AG04450 (cell line): ENCODE measurements at regions of chr15 and their contacts with region 1.

Region 1: GRCh38 chr15:78093242-78094020 is 1.1 kb downstream of the SH2D7 start:
- DNase-seq: peak; percentile 92
- H3K4me3 ChIP-seq: no peak overlapping the region
- H3K27ac ChIP-seq: peak overlapping the region; percentile 40
- H3K27me3 ChIP-seq: peaks cover 12% of the 10 kb centered on the region
- CTCF ChIP-seq: no peak

Region 2: GRCh38 chr15:77966540-77967290 is 126.7 kb before region 1 on chr15:
- CTCF ChIA-PET with region 1: interaction called, 15 read pairs
- POLR2A ChIA-PET with region 1: no interaction called
- DNase-seq: peak; percentile 11
- H3K4me3 ChIP-seq: no peak overlapping the region
- H3K27ac ChIP-seq: no peak overlapping the region
- H3K27me3 ChIP-seq: peaks cover 18% of the 10 kb centered on the region
- CTCF ChIP-seq: peak; percentile 94

Region 3: GRCh38 chr15:78000091-78000926 is 93.1 kb before region 1 on chr15:
- CTCF ChIA-PET with region 1: interaction called, 6 read pairs
- POLR2A ChIA-PET with region 1: interaction called, 10 read pairs
- DNase-seq: no peak
- H3K4me3 ChIP-seq: no peak overlapping the region
- H3K27ac ChIP-seq: no peak overlapping the region
- H3K27me3 ChIP-seq: no peaks in the 10 kb centered on the region
- CTCF ChIP-seq: peak; percentile 30

Region 4: GRCh38 chr15:78049691-78050440 is 43.6 kb before region 1 on chr15:
- CTCF ChIA-PET with region 1: no interaction called
- POLR2A ChIA-PET with region 1: interaction called, 17 read pairs
- DNase-seq: no peak
- H3K4me3 ChIP-seq: no peak overlapping the region
- H3K27ac ChIP-seq: peak overlapping the region; percentile 25
- H3K27me3 ChIP-seq: no peaks in the 10 kb centered on the region
- CTCF ChIP-seq: no peak

Region 5: GRCh38 chr15:78065284-78065872 is 28.1 kb before region 1 on chr15:
- CTCF ChIA-PET with region 1: no interaction called
- POLR2A ChIA-PET with region 1: interaction called, 10 read pairs
- DNase-seq: peak; percentile 94
- H3K4me3 ChIP-seq: peak overlapping the region; percentile 25; the same call in 1 of the 2 replicates
- H3K27ac ChIP-seq: peak overlapping the region; percentile 98
- H3K27me3 ChIP-seq: no peaks in the 10 kb centered on the region
- CTCF ChIP-seq: no peak

Region 6: DNA sequence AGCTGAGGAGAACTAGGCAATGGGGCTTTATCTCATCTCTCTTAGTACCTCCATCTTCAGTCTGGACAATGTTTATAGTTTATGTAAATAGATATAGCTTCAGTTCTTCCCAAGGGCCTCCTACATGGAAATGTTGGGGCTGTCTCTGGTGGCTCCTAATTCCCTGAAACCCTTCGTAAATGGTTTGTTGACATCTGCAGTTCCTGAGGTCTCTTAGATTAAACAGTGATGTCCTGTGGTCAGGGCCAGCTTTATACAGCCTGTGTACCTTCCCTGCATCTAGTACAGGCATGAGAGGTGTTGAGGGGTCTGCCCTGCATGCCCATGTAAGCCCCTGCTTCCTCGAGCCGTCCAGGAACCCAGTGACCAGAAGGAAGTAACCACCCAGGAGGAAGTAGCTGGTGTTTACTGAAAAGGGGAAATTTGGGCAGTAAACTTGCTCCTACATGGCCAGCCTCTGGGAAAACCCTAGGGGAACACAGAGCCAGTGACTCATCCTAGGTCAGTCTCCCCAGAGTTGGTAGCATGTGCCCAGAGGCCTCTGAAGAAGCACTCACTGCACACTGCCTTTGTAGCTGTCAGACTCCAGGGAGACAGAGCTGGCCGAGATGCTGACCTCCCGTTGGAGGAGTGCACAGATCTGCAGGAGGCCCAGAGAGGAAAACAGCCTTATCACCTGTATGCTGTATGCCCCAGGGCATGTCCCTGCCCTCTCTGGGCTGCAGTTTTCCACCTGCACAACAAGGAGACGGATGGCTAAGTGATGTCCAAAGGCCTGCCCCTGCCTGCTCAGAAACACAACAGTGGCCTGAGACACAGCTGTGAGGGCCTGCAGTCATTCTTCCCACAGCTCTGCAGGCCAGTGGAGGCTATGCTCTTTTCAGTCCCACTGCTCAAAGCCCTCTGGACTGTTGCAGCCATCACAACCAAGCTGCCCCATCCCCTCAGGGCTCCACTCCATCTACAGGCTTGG is 11.0 kb before region 1 on chr15:
- CTCF ChIA-PET with region 1: no interaction called
- POLR2A ChIA-PET with region 1: interaction called, 15 read pairs
- DNase-seq: no peak
- H3K4me3 ChIP-seq: no peak overlapping the region
- H3K27ac ChIP-seq: peak overlapping the region; percentile 52
- H3K27me3 ChIP-seq: no peaks in the 10 kb centered on the region
- CTCF ChIP-seq: no peak

Region 7: GRCh38 chr15:78315686-78316282 is 222.4 kb after region 1 on chr15:
- CTCF ChIA-PET with region 1: no interaction called
- POLR2A ChIA-PET with region 1: no interaction called
- DNase-seq: no peak
- H3K4me3 ChIP-seq: no peak overlapping the region
- H3K27ac ChIP-seq: no peak overlapping the region
- H3K27me3 ChIP-seq: peaks cover 18% of the 10 kb centered on the region
- CTCF ChIP-seq: peak; percentile 20; the same call in 1 of the 2 replicates

Region 8: DNA sequence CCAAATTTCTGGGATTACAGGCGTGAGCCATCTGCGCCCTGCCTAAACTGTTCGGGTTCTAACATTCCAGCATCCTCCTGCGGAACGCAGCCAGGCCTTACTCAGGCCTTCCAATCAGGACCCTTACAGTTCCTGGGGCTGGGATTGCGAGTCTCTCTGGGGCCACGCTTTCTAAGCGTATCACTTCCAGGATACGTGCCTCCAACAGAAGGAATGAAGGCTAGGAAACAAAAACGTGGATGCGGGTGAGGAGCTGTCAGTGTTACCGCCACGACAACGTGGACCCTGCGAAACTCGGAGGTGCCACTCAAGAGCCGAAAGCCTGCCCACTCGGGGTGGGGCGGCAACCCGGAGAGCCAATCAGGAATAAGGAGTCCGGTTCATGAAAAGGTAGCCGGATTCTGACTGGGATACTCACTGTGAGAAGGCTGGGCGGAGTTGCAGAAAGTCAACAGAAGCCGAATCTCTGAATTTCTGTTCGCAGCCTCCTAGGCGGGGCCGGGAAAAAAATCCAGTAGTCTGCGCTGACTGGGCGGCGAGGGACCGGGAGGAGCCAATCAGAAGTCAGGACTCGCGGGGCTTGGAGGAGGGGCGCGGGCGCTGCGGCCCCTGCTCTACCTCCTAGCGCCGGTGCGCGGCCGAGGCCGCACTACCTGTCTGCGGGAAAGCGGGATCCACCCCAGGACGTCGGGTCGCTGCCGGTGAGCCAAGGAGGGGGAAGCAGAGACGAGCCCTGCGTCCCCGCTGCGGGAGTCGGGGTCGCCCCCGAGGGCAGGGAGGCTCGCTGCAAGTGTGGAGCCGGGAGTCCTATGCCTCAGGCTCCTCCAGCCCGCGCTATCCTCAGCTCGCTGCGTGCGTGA is 413.8 kb after region 1 on chr15 and contains the start of gene HYKK:
- CTCF ChIA-PET with region 1: no interaction called
- POLR2A ChIA-PET with region 1: no interaction called
- DNase-seq: peak; percentile 90
- H3K4me3 ChIP-seq: peak within 1 kb of the TSS; percentile 97
- H3K27ac ChIP-seq: peak within 1 kb of the TSS; percentile 11
- H3K27me3 ChIP-seq: no peaks in the 10 kb centered on the region
- CTCF ChIP-seq: 0 out of 2 replicates have a peak, but pooled peaks have one; percentile 14
- polyA plus RNA-seq, gene HYKK: 3.6 and 4.1 TPM in 2 replicates